ENCODE measurements at regions of chr1 and their contacts with region 1.

Region 1: GRCh38 chr1:153967082-153968000 is at the start of gene CREB3L4:
- DNase-seq: peak; percentile 70 to 89 (median 85)
- H3K4me3 ChIP-seq: peak within 1 kb of the TSS; percentile 53
- H3K4me3 Mint-ChIP-seq: peak within 1 kb of the TSS; percentile 92 to 97 (median 96)
- H3K27ac ChIP-seq: peak within 1 kb of the TSS; percentile 62
- H3K27ac Mint-ChIP-seq: peak within 1 kb of the TSS; percentile 86 to 99 (median 97)
- H3K4me1 ChIP-seq: peaks cover 39% of the 10 kb centered on the region
- H3K4me1 Mint-ChIP-seq: peaks cover 45 to 63% (median 52%) of the 10 kb centered on the region in 3 donors
- H3K27me3 ChIP-seq: no peaks in the 10 kb centered on the region
- H3K27me3 Mint-ChIP-seq: no peaks in the 10 kb centered on the region
- total RNA-seq, gene CREB3L4: 10.0 to 10.1 TPM

Region 2: GRCh38 chr1:153796791-153797659 is 170.3 kb before region 1 on chr1:
- CTCF ChIA-PET with region 1: interaction called, 14 read pairs
- POLR2A ChIA-PET with region 1: interaction called, 3 read pairs
- DNase-seq: peak; percentile 74 to 87 (median 77)
- H3K4me3 ChIP-seq: no peak overlapping the region
- H3K4me3 Mint-ChIP-seq: peak overlapping the region in 3 of 7 donors; percentile 1 to 28 (median 20)
- H3K27ac ChIP-seq: no peak overlapping the region
- H3K27ac Mint-ChIP-seq: peak overlapping the region in 7 of 8 donors; percentile 8 to 87 (median 69)
- H3K4me1 ChIP-seq: peaks cover 12% of the 10 kb centered on the region
- H3K4me1 Mint-ChIP-seq: peaks cover 16 to 29% (median 17%) of the 10 kb centered on the region in 3 donors
- H3K27me3 ChIP-seq: no peaks in the 10 kb centered on the region
- H3K27me3 Mint-ChIP-seq: peaks cover 0 to 2% of the 10 kb centered on the region in 2 donors

Region 3: GRCh38 chr1:153903841-153904455 is 63.4 kb before region 1 on chr1:
- CTCF ChIA-PET with region 1: no interaction called
- POLR2A ChIA-PET with region 1: no interaction called
- DNase-seq: no peak
- H3K4me3 ChIP-seq: no peak overlapping the region
- H3K4me3 Mint-ChIP-seq: no peak overlapping the region
- H3K27ac ChIP-seq: no peak overlapping the region
- H3K27ac Mint-ChIP-seq: no peak overlapping the region
- H3K4me1 ChIP-seq: no peaks in the 10 kb centered on the region
- H3K4me1 Mint-ChIP-seq: peaks cover 35 to 59% (median 37%) of the 10 kb centered on the region in 3 donors
- H3K27me3 ChIP-seq: no peaks in the 10 kb centered on the region
- H3K27me3 Mint-ChIP-seq: no peaks in the 10 kb centered on the region

Region 4: DNA sequence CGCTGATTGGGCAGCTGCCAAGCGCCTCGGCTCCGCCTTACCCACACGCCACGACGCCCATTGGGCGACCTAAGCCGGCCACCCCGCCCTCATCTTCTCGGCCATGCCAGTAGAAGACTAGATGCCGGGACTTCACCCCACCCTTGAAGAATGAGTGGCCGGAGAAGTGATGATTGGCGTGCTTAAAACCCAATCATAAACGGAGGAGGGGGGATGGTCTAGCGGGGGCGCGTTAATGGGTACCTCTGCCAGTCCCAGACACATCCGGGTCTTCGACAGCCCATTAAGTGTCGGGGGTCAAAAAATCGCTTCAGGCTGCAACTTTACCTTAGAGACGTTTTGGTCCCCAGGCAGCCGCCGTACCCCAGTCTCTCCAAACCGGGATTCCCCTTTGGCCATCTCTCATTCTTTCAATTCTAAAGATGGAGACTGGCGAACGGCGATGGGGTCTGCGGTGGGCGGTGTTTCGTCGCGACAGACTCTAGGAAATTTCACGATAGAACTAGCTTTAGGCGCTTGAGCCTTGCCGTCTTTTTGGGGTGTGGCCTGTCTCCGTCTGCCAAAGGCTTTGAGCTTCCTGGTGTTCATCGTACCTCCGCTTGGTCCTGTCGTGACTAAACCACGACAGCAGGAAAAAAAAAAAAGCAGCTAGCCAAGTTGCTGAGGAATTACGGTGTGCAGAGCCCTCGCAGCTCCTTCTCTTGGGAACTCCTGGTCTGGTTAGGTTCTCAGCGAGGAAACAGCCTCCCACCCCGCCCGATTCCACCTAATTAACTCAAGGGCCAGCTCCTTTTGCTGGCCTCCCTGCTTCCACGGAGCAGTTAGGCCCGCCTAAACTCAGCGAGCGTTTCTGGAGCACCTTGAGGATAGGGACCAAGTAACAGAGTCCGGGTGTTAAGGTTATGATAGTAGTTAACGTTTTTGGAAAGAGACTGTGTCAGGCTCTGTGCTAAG is 44.1 kb before region 1 on chr1 and contains the start of gene GATAD2B:
- CTCF ChIA-PET with region 1: interaction called, 4 read pairs
- POLR2A ChIA-PET with region 1: interaction called, 25 read pairs
- DNase-seq: peak; percentile 97 to 100 (median 99)
- H3K4me3 ChIP-seq: peak within 1 kb of the TSS; percentile 98
- H3K4me3 Mint-ChIP-seq: peak within 1 kb of the TSS; percentile 79 to 97 (median 94)
- H3K27ac ChIP-seq: peak within 1 kb of the TSS; percentile 96
- H3K27ac Mint-ChIP-seq: peak within 1 kb of the TSS; percentile 95 to 100 (median 98)
- H3K4me1 ChIP-seq: peaks cover 44% of the 10 kb centered on the region
- H3K4me1 Mint-ChIP-seq: peaks cover 46 to 60% (median 52%) of the 10 kb centered on the region in 3 donors
- H3K27me3 ChIP-seq: no peaks in the 10 kb centered on the region
- H3K27me3 Mint-ChIP-seq: peaks cover 0 to 4% of the 10 kb centered on the region in 2 donors
- total RNA-seq, gene GATAD2B: 64.9 to 71.9 TPM

Region 5: DNA sequence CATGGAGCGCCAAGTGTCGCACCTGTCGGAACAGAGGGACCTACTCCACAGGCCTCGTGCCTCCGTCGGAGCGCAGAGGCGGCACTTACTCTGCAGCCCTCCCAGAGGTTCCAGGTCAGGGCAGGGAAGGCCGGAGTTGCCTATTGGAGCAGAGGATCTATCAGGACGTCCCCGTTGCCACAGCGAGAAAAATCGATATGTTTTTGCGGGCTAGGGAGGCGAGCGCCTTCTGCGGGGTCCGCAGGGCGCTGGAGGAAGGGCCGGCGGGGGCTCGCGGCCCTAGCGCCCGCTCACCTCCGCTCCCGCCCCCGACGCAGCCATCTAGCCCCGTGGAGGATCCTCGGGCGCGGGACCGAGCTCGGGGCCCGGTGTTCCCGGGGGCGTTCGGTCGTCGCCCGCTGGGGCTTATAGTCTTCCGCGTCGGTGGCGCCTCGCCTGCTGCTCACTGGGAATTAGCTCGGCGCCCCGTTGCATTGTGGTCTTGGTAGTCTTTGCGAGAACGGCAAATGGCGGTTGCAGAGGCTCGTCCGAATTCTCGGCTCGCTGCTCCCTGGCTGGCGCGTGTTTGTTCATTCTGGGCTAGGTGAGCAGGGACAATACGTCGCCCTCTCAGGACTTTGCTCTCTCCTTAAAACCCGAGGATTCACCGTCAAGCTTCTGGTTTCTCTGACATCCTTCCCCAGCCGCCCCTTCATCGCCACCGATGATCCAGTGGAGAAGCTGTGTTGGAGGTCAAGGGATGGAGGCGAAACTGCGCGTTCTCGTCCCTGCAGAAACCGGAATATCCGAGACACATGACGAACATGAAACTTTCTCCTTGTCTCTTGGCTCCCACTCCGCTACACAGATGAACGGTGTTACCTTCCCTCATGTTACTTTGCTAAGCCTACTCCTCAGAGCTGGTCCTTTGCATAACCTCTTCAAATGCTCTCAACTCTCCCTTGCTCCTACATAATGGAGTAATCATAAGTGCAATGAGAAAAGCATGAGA is 10.2 kb after region 1 on chr1 and contains the start of gene JTB:
- CTCF ChIA-PET with region 1: interaction called, 37 read pairs
- POLR2A ChIA-PET with region 1: interaction called, 58 read pairs
- DNase-seq: peak; percentile 74 to 90 (median 81)
- H3K4me3 ChIP-seq: peak within 1 kb of the TSS; percentile 93
- H3K4me3 Mint-ChIP-seq: peak within 1 kb of the TSS; percentile 91 to 99 (median 98)
- H3K27ac ChIP-seq: peak within 1 kb of the TSS; percentile 88
- H3K27ac Mint-ChIP-seq: peak within 1 kb of the TSS; percentile 88 to 100 (median 96)
- H3K4me1 ChIP-seq: peaks cover 18% of the 10 kb centered on the region
- H3K4me1 Mint-ChIP-seq: peaks cover 28 to 39% (median 30%) of the 10 kb centered on the region in 3 donors
- H3K27me3 ChIP-seq: no peaks in the 10 kb centered on the region
- H3K27me3 Mint-ChIP-seq: peaks cover 0 to 1% of the 10 kb centered on the region in 2 donors
- total RNA-seq, gene JTB: 232 to 239 TPM

Region 6: GRCh38 chr1:154157520-154158306 is 190.4 kb after region 1 on chr1:
- CTCF ChIA-PET with region 1: no interaction called
- POLR2A ChIA-PET with region 1: no interaction called
- DNase-seq: peak; percentile 49 to 85 (median 81)
- H3K4me3 ChIP-seq: peak overlapping the region; percentile 4
- H3K4me3 Mint-ChIP-seq: peak overlapping the region; percentile 16 to 86 (median 67)
- H3K27ac ChIP-seq: peak overlapping the region; percentile 56
- H3K27ac Mint-ChIP-seq: peak overlapping the region; percentile 82 to 98 (median 94)
- H3K4me1 ChIP-seq: peaks cover 73% of the 10 kb centered on the region
- H3K4me1 Mint-ChIP-seq: peaks cover 44 to 71% (median 62%) of the 10 kb centered on the region in 3 donors
- H3K27me3 ChIP-seq: no peaks in the 10 kb centered on the region
- H3K27me3 Mint-ChIP-seq: peaks cover 0 to under 1% of the 10 kb centered on the region in 2 donors